Mammary epithelial cell (primary cell): ENCODE measurements at regions of chrX and their contacts with region 1.

Region 1: DNA sequence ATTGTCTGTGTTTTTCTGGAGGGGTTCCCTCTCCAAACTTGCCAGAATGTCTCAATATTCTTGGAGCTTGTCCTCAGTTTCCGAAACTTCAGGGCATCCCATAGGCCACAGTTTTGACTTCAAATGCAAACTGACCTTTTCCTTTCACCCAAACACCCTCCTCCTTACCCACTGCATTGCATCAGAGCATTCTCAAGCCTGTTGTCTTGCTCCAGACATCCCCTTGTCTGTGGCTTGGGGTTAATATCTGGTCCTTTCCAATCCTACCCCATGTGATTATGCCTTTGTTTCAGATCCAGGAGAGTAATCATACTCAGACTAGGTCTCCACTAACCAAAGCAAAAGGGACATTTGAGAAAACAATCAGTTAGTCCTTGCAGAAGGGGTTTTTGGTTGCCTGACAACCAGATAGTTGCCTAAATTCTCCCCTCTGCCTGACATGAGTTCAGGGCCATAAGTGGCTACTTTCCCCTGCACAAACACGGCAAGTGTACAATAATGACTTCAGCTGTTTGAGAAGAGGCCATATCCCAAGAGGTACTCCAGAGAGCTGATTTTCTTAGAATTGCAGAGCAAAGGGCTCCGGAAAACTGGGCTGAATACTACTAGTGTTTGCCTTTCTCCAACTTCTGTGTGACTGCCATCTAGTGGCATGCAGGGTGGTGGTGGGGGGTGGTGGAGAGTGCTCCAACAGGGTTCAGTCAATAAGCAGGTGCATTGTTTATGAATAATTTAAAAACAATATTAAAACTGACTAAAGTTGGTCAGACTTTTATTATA is 130.2 kb downstream of the CHRDL1 start:
- DNase-seq: peak; percentile 9
- H3K4me3 ChIP-seq: no peak overlapping the region
- H3K27ac ChIP-seq: no peak overlapping the region
- H3K4me1 ChIP-seq: no peaks in the 10 kb centered on the region
- H3K27me3 ChIP-seq: no peaks in the 10 kb centered on the region
- CTCF ChIP-seq: peak; percentile 66 to 69

Region 2: DNA sequence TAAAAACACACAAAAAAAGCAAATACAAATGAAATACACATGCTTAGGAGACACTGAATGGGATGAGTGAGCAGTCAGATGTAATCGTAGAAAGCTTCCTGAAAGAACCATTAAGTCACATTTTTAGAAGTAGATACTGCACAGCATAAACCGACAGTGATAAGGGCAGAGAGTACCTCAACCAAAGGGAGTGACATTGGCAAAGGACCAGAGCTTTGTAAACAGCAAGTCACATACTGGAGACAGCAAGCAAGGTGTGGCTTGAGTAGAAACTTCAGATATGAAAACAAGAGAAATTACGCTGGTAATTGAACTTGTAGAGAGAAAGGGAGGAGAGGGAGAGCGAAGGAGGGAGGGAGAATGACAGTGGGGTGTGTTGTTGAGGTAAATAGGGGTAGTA is 38.2 kb after region 1 on chrX:
- CTCF ChIA-PET with region 1: no interaction called
- dilution Hi-C with region 1: loop called (anchors 5 kb)
- in situ Hi-C with region 1: no loop called
- intact Hi-C with region 1: no loop called
- DNase-seq: no peak
- H3K4me3 ChIP-seq: no peak overlapping the region
- H3K27ac ChIP-seq: no peak overlapping the region
- H3K4me1 ChIP-seq: no peaks in the 10 kb centered on the region
- H3K27me3 ChIP-seq: peaks cover 1% of the 10 kb centered on the region
- CTCF ChIP-seq: no peak